AG04450 (cell line): ENCODE measurements at regions of chr6 and their contacts with region 1.

Region 1: GRCh38 chr6:93423542-93423941 is 4.2 kb upstream of the EPHA7 start:
- DNase-seq: no peak
- H3K4me3 ChIP-seq: no peak overlapping the region
- H3K27ac ChIP-seq: no peak overlapping the region
- H3K27me3 ChIP-seq: peaks cover 6% of the 10 kb centered on the region
- CTCF ChIP-seq: peak; percentile 49

Region 2: GRCh38 chr6:92810913-92811312 is 612.6 kb before region 1 on chr6:
- CTCF ChIA-PET with region 1: interaction called, 19 read pairs
- POLR2A ChIA-PET with region 1: no interaction called
- DNase-seq: peak; percentile 1
- H3K4me3 ChIP-seq: no peak overlapping the region
- H3K27ac ChIP-seq: no peak overlapping the region
- H3K27me3 ChIP-seq: no peaks in the 10 kb centered on the region
- CTCF ChIP-seq: peak; percentile 64

Region 3: DNA sequence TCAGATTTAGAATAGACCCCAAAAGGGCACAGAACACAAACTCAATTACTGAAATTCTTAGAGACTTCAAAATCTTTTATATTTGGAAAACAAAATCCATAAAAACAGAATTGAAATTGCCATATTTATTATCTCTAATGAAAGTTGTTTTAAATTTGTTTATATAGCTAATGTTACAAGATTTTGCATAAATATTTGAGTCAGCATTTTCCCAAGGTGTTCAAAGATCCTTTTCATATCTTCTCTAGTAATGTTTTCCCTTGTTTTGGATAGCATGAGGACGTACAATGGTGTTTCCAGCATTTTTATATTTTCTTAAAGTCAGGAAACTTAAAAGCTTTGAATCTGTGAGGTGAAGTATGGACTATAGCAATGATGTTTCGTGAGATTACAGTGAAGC is 231.0 kb after region 1 on chr6:
- CTCF ChIA-PET with region 1: no interaction called
- POLR2A ChIA-PET with region 1: no interaction called
- DNase-seq: no peak
- H3K4me3 ChIP-seq: no peak overlapping the region
- H3K27ac ChIP-seq: no peak overlapping the region
- H3K27me3 ChIP-seq: no peaks in the 10 kb centered on the region
- CTCF ChIP-seq: no peak

Region 4: DNA sequence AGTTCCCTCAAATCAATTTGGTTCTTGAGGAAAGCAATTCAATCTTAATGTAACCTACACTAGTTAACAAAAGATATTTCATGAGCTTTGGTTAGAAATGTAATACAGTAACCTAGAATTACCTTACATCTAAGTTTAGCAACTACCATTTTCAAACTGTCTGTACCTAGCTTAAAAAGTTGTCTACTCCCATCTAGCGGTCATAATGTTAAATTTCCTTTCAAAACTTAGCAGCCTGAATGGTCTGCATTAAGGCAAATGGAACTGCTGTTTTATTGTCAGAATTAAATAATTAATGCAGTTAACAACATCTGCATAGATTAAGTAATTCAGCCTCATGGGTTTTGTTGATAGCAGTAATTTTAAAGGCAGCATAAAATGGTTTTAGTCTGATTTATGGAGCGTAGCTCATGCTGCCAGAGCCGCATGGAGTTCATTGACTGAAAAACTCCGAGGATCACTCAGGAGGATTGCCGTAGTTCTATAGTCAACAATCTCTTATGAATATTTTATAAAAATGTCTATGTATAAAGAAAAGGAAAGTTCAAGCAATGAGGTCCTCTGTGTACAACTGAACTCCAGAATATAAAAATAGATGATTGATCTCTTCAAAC is 1668.4 kb after region 1 on chr6:
- CTCF ChIA-PET with region 1: interaction called, 24 read pairs
- POLR2A ChIA-PET with region 1: interaction called, 3 read pairs
- DNase-seq: peak; percentile 16
- H3K4me3 ChIP-seq: no peak overlapping the region
- H3K27ac ChIP-seq: no peak overlapping the region
- H3K27me3 ChIP-seq: no peaks in the 10 kb centered on the region
- CTCF ChIP-seq: peak; percentile 69